Psoas muscle (tissue), 8 donors: ENCODE measurements at regions of chr14 and their contacts with region 1.

Region 1: DNA sequence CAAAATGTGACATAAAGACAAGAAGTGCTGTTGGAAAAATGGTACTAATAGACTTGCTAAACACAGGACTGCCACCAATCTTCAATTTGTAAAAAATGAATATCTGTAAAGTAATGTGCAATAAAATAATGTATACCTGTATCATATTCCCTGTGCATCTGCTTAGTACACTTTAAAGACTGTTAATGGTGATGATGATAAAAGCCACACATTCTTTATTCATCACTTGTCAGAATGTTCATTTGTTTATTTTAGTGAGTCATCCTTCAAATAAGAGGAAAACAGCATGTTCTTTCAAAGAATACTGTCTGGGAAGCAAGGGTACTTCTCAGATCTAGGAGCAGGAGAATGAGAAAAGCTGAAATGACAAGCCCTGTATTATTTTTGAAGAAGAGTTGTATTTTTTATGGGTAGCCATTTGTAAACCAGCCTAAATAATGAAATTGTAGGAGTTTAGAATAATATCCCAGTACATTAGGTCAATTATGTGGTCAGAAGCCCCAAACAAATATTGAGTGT is 78.3 kb upstream of the PSMA6 start:
- DNase-seq: no peak
- ATAC-seq: no peak
- H3K4me3 ChIP-seq: no peak overlapping the region
- H3K27ac ChIP-seq: no peak overlapping the region
- H3K4me1 ChIP-seq: no peaks in the 10 kb centered on the region
- H3K27me3 ChIP-seq: no peaks in the 10 kb centered on the region
- CTCF ChIP-seq: no peak

Region 2: DNA sequence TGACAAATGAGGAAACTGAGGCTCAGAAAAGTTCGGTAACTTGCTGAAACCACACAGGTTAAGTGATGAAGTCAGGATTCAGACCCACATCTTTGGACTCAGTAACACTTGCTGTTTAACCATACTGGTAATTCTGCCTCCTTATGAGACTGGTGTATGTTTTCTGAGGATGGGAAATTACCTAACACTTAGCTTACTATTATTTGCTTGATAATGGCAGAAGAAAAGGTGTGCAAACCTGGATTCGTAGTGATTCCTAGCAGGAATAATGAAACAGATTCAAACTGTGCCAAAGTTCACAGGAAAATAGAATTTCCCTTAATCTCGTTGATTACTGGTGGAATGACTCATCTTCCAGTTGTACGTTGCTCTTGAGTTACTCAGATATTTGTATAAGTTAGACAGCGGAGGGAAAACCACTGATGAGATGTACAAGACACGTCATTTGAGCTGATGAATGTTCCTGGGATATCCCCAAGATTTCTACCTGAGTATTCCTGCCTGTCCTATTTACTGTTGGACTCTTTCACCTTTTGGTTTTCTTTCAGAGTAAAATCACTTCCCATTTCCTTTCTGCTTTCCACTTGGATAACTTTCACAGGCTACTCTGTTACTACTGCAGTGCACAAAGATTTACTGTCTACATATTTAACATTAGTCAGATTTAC is 54.1 kb before region 1 on chr14:
- intact Hi-C with region 1: loop called in 1 of 2 experiments (anchors 5 kb)
- DNase-seq: no peak
- ATAC-seq: no peak
- H3K4me3 ChIP-seq: no peak overlapping the region
- H3K27ac ChIP-seq: no peak overlapping the region
- H3K4me1 ChIP-seq: peaks cover 6% of the 10 kb centered on the region
- H3K27me3 ChIP-seq: no peaks in the 10 kb centered on the region
- CTCF ChIP-seq: no peak

Region 3: DNA sequence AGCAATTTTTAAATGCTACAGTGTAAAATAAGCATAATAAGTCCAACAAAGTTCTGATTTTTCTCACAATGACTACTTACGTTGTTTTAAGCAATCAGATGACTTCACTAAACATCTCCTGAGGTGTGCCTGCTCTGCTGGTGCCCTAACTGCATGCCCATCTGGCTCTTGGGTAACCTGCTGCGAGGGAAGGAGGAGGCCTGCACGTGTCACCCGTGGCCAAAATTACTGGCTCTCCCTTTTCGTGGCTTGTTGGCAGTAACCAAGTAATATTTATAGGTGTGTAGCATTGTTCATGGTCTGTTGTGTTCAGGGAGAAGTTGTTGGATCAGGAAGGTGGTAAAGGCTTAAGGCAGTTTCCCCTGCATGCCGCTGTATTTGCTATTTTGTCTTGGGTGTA is 196.9 kb after region 1 on chr14:
- intact Hi-C with region 1: loop called in 1 of 2 experiments (anchors 2 kb)
- DNase-seq: no peak
- ATAC-seq: no peak
- H3K4me3 ChIP-seq: no peak overlapping the region
- H3K27ac ChIP-seq: no peak overlapping the region
- H3K4me1 ChIP-seq: peaks cover 10% of the 10 kb centered on the region
- H3K27me3 ChIP-seq: no peaks in the 10 kb centered on the region
- CTCF ChIP-seq: no peak